Psoas muscle (tissue), 8 donors: ENCODE measurements at regions of chr13 and their contacts with region 1.

Region 1: DNA sequence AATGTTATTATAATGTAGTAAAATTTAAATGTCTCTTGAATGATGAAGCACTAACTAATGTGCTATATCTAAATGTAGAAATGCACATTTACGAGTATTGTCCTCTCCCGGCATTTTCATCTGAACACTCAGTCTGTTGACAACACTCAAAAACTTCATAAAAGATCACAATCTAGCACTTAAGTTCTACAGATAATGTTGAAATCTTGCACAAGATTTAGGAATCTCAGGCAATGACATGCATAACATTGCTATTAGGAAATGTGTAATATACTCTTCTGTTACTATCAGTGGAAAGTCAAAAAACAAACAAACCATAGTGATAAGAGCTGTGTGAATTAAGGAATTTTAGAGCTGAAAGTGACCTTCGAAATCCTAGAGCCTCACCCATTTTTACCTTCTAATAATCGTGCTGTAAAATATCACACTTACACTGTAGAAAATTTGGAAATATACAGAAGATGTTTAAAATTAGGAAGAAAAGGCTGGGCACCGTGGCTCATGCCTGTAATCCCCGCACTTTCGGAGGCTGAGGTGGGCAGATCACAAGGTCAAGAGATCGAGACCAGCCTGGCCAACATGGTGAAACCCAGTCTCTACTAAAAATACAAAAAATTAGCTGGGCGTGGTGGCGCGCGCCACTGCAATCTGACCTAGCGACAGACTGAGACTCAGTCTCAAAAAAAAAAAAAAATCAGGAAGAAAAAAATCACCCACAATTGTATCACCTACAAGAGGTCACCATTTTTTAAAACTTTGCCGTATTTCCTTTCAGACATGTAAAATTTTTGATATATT is 37.7 kb upstream of the XPO4 start:
- DNase-seq: no peak
- ATAC-seq: peak in 1 of 4 donors; percentile 17
- H3K4me3 ChIP-seq: no peak overlapping the region
- H3K27ac ChIP-seq: peak overlapping the region; percentile 78
- H3K4me1 ChIP-seq: peaks cover 14% of the 10 kb centered on the region
- H3K27me3 ChIP-seq: no peaks in the 10 kb centered on the region
- CTCF ChIP-seq: no peak

Region 2: DNA sequence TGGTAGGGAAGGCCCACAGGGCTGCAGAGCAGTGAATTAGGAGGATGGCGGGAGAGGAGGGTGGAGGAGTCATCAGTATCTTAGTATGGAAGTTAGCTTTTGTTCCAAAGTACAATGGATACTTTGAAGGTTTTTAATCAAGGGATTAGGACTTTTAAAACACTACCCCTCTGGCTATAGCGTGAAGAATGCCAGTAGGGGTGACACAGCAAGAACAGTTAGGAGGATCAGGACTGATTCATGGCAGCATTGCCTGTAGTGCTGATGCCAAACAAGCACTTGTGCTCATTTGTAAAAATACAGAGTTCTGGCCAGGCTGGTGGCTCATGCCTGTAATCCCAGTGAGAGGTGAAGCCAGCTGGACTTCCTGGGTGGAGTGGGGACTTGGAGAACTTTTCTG is 189.8 kb after region 1 on chr13:
- intact Hi-C with region 1: loop called (anchors 5 kb)
- DNase-seq: no peak
- ATAC-seq: no peak
- H3K4me3 ChIP-seq: no peak overlapping the region
- H3K27ac ChIP-seq: no peak overlapping the region
- H3K4me1 ChIP-seq: no peaks in the 10 kb centered on the region
- H3K27me3 ChIP-seq: no peaks in the 10 kb centered on the region
- CTCF ChIP-seq: no peak

Region 3: GRCh38 chr13:21176220-21176982 is 236.1 kb after region 1 on chr13 and contains the starts of genes MRPL57 and SKA3:
- intact Hi-C with region 1: loop called in 1 of 2 experiments (anchors 2 kb)
- DNase-seq: peak; percentile 92 to 96
- ATAC-seq: peak; percentile 99
- H3K4me3 ChIP-seq: peak within 1 kb of the TSS; percentile 100
- H3K27ac ChIP-seq: peak within 1 kb of the TSS; percentile 98
- H3K4me1 ChIP-seq: peaks cover 17% of the 10 kb centered on the region
- H3K27me3 ChIP-seq: no peaks in the 10 kb centered on the region
- CTCF ChIP-seq: no peak
- total RNA-seq, gene MRPL57: 17.6 to 30.7 (median 23.8) TPM
- total RNA-seq, gene SKA3: 0.14 to 1.5 (median 0.32) TPM